Heart left ventricle (tissue), 16 donors: ENCODE measurements at regions of chr3 and their contacts with region 1.

Region 1: DNA sequence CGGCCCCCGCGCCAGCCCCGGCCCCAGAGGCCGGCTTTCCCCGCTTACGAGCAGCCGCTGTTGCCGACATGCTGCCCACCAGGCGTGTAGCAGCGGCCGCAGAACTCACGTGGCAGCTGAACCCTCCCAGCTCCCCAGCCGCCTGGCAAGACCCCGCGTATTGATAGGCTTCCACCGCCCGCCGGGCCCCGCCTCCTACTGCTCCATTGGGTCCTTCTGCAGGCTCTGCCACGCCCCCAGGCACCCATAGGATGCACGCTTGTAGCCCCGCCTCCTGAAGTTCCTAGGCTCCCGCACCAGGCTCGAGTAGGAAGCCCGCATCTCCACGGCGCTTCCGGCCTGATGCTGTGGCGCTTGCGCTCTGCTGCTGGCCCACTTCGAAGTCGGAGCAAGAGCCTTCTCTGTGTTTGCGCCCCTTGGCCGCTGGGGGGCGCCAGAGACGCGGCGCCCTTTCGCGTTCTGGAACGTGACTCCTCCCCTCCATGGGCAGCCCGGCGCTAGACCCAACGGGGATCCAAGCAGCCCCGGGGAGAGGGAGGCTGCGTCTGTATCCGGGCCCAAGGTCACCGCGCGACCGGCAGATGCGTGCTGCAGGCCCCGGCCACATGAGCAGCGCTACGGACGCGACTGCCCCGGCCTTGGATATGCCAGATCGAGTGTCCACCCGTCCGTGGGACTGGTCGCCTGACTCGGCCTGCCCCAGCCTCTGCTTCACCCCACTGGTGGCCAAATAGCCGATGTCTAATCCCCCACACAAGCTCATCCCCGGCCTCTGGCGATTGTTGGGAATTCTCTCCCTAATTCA is at the starts of genes PARP3 and RRP9:
- DNase-seq: peak; percentile 100
- ATAC-seq: peak; percentile 95 to 98 (median 96)
- H3K4me3 ChIP-seq: peak within 1 kb of the TSS; percentile 36 to 93 (median 76)
- H3K27ac ChIP-seq: peak within 1 kb of the TSS; percentile 90 to 99 (median 95)
- H3K4me1 ChIP-seq: peaks cover 3 to 32% (median 23%) of the 10 kb centered on the region in 12 donors
- H3K27me3 ChIP-seq: no peaks in the 10 kb centered on the region
- CTCF ChIP-seq: peak in 11 of 12 donors; percentile 99 to 100 (median 100)
- POLR2A ChIP-seq: peak in 1 of 2 donors; percentile 63
- total RNA-seq, gene PARP3: 11.0 to 37.5 (median 14.5) TPM
- total RNA-seq, gene RRP9: 6.1 to 14.7 (median 10.2) TPM

Region 2: GRCh38 chr3:51955893-51956770 is 14.1 kb after region 1 on chr3:
- intact Hi-C with region 1: loop called in 1 of 10 experiments (anchors 1 kb)
- DNase-seq: peak; percentile 67 to 84 (median 72)
- ATAC-seq: peak; percentile 18 to 87 (median 74)
- H3K4me3 ChIP-seq: peak overlapping the region; percentile 9 to 62 (median 52)
- H3K27ac ChIP-seq: peak overlapping the region; percentile 16 to 90 (median 79)
- H3K4me1 ChIP-seq: peaks cover 0 to 27% (median 11%) of the 10 kb centered on the region in 12 donors
- H3K27me3 ChIP-seq: peaks cover 0 to 21% (median 0%) of the 10 kb centered on the region in 9 donors
- CTCF ChIP-seq: peak; percentile 23 to 57 (median 41)
- POLR2A ChIP-seq: no peak

Region 3: GRCh38 chr3:51974963-51975851 is 33.2 kb after region 1 on chr3 and contains the start of gene ABHD14A:
- intact Hi-C with region 1: loop called in 9 of 10 experiments (anchors 1 to 5 kb)
- DNase-seq: peak; percentile 57 to 90 (median 78)
- ATAC-seq: peak; percentile 45 to 80 (median 76)
- H3K4me3 ChIP-seq: peak within 1 kb of the TSS; percentile 47 to 87 (median 70)
- H3K27ac ChIP-seq: peak within 1 kb of the TSS; percentile 89 to 98 (median 96)
- H3K4me1 ChIP-seq: peaks cover 5 to 50% (median 23%) of the 10 kb centered on the region in 12 donors
- H3K27me3 ChIP-seq: no peaks in the 10 kb centered on the region
- CTCF ChIP-seq: peak in 1 of 12 donors; percentile 11
- POLR2A ChIP-seq: peak; percentile 33 to 61
- total RNA-seq, gene ABHD14A: 17.7 to 51.4 (median 22.1) TPM

Region 4: GRCh38 chr3:51995346-51996163 is 53.6 kb after region 1 on chr3 and contains the start of gene RPL29:
- intact Hi-C with region 1: loop called in 1 of 10 experiments (anchors 1 kb)
- DNase-seq: peak; percentile 90 to 93 (median 92)
- ATAC-seq: peak; percentile 91 to 96 (median 94)
- H3K4me3 ChIP-seq: peak within 1 kb of the TSS; percentile 67 to 94 (median 76)
- H3K27ac ChIP-seq: peak within 1 kb of the TSS; percentile 63 to 95 (median 85)
- H3K4me1 ChIP-seq: peaks cover 0 to 25% (median 12%) of the 10 kb centered on the region in 12 donors
- H3K27me3 ChIP-seq: no peaks in the 10 kb centered on the region
- CTCF ChIP-seq: peak in 8 of 12 donors; percentile 22 to 67 (median 30)
- POLR2A ChIP-seq: peak in 1 of 2 donors; percentile 56
- total RNA-seq, gene RPL29: 515 to 986 (median 681) TPM

Region 5: GRCh38 chr3:52090131-52090932 is 148.3 kb after region 1 on chr3:
- intact Hi-C with region 1: no loop called
- DNase-seq: peak in 4 of 5 donors; percentile 22 to 60 (median 42)
- ATAC-seq: peak in 3 of 4 donors; percentile 32 to 56 (median 53)
- H3K4me3 ChIP-seq: no peak overlapping the region
- H3K27ac ChIP-seq: peak overlapping the region in 11 of 12 donors; percentile 26 to 86 (median 64)
- H3K4me1 ChIP-seq: peaks cover 0 to 72% (median 56%) of the 10 kb centered on the region in 12 donors
- H3K27me3 ChIP-seq: no peaks in the 10 kb centered on the region
- CTCF ChIP-seq: no peak
- POLR2A ChIP-seq: no peak

Region 6: GRCh38 chr3:52123106-52123725 is 181.2 kb after region 1 on chr3:
- intact Hi-C with region 1: no loop called
- DNase-seq: peak; percentile 75 to 88 (median 79)
- ATAC-seq: peak; percentile 86
- H3K4me3 ChIP-seq: no peak overlapping the region
- H3K27ac ChIP-seq: peak overlapping the region in 10 of 12 donors; percentile 65 to 89 (median 80)
- H3K4me1 ChIP-seq: peaks cover 6 to 50% (median 30%) of the 10 kb centered on the region in 12 donors
- H3K27me3 ChIP-seq: no peaks in the 10 kb centered on the region
- CTCF ChIP-seq: peak; percentile 88 to 99 (median 95)
- POLR2A ChIP-seq: no peak

Region 7: GRCh38 chr3:52144034-52144795 is 202.2 kb after region 1 on chr3:
- intact Hi-C with region 1: loop called in 3 of 10 experiments (anchors 5 kb)
- DNase-seq: peak; percentile 86 to 89 (median 89)
- ATAC-seq: peak; percentile 38 to 81 (median 76)
- H3K4me3 ChIP-seq: no peak overlapping the region
- H3K27ac ChIP-seq: no peak overlapping the region
- H3K4me1 ChIP-seq: peaks cover 0 to 21% (median 6%) of the 10 kb centered on the region in 12 donors
- H3K27me3 ChIP-seq: no peaks in the 10 kb centered on the region
- CTCF ChIP-seq: peak; percentile 90 to 99 (median 98)
- POLR2A ChIP-seq: no peak